ENCODE measurements at regions of chr15 and their contacts with region 1.

Region 1: GRCh38 chr15:94670438-94671034 is 439.2 kb downstream of the MCTP2 start:
- DNase-seq: peak in 1 of 2 experiments; percentile 34
- H3K4me3 ChIP-seq: no peak overlapping the region
- H3K4me3 Mint-ChIP-seq: no peak overlapping the region
- H3K27ac Mint-ChIP-seq: no peak overlapping the region
- H3K4me1 ChIP-seq: no peaks in the 10 kb centered on the region
- H3K4me1 Mint-ChIP-seq: no peaks in the 10 kb centered on the region
- H3K27me3 ChIP-seq: no peaks in the 10 kb centered on the region
- H3K27me3 Mint-ChIP-seq: peaks cover 12% of the 10 kb centered on the region
- CTCF ChIP-seq: peak; percentile 49 to 59

Region 2: GRCh38 chr15:94582369-94582768 is 88.2 kb before region 1 on chr15:
- CTCF ChIA-PET with region 1: no interaction called
- POLR2A ChIA-PET with region 1: no interaction called
- intact Hi-C with region 1: loop called (anchors 5 kb)
- DNase-seq: peak; percentile 38 to 41
- H3K4me3 ChIP-seq: no peak overlapping the region
- H3K4me3 Mint-ChIP-seq: no peak overlapping the region
- H3K27ac Mint-ChIP-seq: no peak overlapping the region
- H3K4me1 ChIP-seq: no peaks in the 10 kb centered on the region
- H3K4me1 Mint-ChIP-seq: no peaks in the 10 kb centered on the region
- H3K27me3 ChIP-seq: no peaks in the 10 kb centered on the region
- H3K27me3 Mint-ChIP-seq: peaks cover 16% of the 10 kb centered on the region
- CTCF ChIP-seq: peak; percentile 35 to 51

Region 3: DNA sequence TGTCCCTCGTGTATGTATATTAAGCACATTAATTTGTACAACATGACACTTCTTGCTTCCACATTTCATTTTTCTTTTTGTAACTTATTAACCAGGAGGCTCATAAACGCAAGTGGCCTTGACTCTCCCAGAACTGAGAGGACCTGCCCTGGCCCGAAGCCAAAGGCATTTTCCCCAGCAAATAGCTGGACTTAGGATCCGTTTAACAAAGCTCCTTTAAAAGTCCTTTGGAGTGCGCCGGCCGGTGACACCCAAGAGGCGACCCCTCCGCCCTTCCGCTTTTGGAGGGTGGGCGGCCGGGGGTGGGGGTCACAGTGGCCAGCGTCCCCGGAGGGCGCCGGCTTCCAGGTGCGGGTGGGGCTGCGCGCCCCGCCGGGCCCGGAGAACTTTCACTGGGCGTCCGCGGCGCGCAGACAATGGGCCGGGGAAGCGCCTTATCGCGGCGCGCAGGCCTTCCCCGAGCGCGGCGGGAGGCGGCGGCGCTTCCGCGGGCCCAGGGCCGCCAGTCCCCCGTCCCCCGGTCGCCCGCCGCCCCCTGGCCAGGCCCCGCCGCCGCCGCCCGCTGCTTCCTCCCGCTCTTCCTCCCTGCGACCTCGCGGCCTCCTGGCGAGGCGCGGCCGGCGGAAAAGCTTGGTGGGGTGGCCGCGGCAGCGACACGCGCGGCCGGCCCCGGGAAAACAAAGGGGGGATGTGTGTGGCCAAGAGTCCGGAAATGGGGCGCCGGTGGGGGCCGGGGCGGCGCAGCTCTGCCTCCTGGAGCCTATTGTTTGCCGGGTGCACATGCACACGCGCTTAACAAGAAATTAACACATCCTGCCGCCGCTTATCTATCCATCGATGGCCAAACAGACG is 174.2 kb after region 1 on chr15:
- CTCF ChIA-PET with region 1: no interaction called
- POLR2A ChIA-PET with region 1: no interaction called
- intact Hi-C with region 1: loop called (anchors 2 kb)
- DNase-seq: peak; percentile 78 to 84
- H3K4me3 ChIP-seq: peak overlapping the region; percentile 34
- H3K4me3 Mint-ChIP-seq: peak overlapping the region; percentile 76
- H3K27ac Mint-ChIP-seq: peak overlapping the region; percentile 84
- H3K4me1 ChIP-seq: peaks cover 10% of the 10 kb centered on the region; the same call in 1 of the 2 replicates
- H3K4me1 Mint-ChIP-seq: peaks cover 6% of the 10 kb centered on the region
- H3K27me3 ChIP-seq: no peaks in the 10 kb centered on the region
- H3K27me3 Mint-ChIP-seq: no peaks in the 10 kb centered on the region
- CTCF ChIP-seq: peak in 1 of 2 experiments; percentile 10

Region 4: DNA sequence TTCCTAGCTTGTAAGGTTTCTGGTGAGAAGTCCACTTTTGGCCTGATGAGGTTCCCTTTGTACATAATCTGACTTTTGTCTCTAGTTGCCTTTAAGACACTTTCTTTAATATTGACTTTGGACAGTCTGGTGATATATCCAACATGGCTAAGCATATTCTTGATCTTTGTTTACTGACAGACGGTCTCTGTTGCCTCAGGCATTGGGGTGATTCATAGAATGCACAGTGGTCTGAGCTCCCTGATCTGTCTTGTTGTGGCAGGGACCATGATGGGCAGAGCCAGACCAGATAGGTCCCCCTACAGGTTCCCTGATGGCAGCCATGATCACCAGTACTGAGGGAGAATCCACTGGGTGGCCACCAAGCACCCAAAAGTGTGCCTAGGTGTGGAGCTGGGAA is 239.0 kb after region 1 on chr15:
- CTCF ChIA-PET with region 1: no interaction called
- POLR2A ChIA-PET with region 1: no interaction called
- intact Hi-C with region 1: loop called (anchors 5 kb)
- DNase-seq: no peak
- H3K4me3 ChIP-seq: no peak overlapping the region
- H3K4me3 Mint-ChIP-seq: no peak overlapping the region
- H3K27ac Mint-ChIP-seq: no peak overlapping the region
- H3K4me1 ChIP-seq: peaks cover 3% of the 10 kb centered on the region; the same call in 1 of the 2 replicates
- H3K4me1 Mint-ChIP-seq: peaks cover 6% of the 10 kb centered on the region
- H3K27me3 ChIP-seq: no peaks in the 10 kb centered on the region
- H3K27me3 Mint-ChIP-seq: no peaks in the 10 kb centered on the region
- CTCF ChIP-seq: no peak

Region 5: GRCh38 chr15:95025924-95026728 is 355.6 kb after region 1 on chr15:
- CTCF ChIA-PET with region 1: no interaction called
- POLR2A ChIA-PET with region 1: no interaction called
- intact Hi-C with region 1: loop called (anchors 1 kb)
- DNase-seq: peak; percentile 42 to 48
- H3K4me3 ChIP-seq: no peak overlapping the region
- H3K4me3 Mint-ChIP-seq: no peak overlapping the region
- H3K27ac Mint-ChIP-seq: no peak overlapping the region
- H3K4me1 ChIP-seq: no peaks in the 10 kb centered on the region
- H3K4me1 Mint-ChIP-seq: no peaks in the 10 kb centered on the region
- H3K27me3 ChIP-seq: no peaks in the 10 kb centered on the region
- H3K27me3 Mint-ChIP-seq: peaks cover 5% of the 10 kb centered on the region
- CTCF ChIP-seq: peak in 1 of 2 experiments; percentile 47

Region 6: DNA sequence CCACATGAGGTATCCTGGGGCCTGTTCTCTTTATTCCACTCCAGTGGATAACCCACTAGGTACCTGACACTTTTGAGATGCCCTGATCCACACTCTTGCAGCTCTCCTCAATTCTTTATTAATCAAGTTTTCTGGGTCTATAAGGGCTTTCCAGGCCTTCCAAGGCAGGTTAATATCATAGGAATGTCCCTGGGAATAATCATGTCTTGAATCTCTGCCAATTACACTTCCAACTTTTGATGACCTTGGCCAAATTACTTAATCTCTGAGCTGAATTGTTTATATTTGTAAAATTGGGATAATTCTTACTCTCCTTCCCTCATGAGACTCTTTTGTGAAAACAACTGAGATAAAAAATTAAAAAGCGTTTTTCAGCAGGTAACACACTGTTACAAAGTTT is 442.5 kb after region 1 on chr15:
- CTCF ChIA-PET with region 1: no interaction called
- POLR2A ChIA-PET with region 1: no interaction called
- intact Hi-C with region 1: loop called (anchors 5 kb)
- DNase-seq: no peak
- H3K4me3 ChIP-seq: no peak overlapping the region
- H3K4me3 Mint-ChIP-seq: no peak overlapping the region
- H3K27ac Mint-ChIP-seq: no peak overlapping the region
- H3K4me1 ChIP-seq: no peaks in the 10 kb centered on the region
- H3K4me1 Mint-ChIP-seq: no peaks in the 10 kb centered on the region
- H3K27me3 ChIP-seq: no peaks in the 10 kb centered on the region
- H3K27me3 Mint-ChIP-seq: no peaks in the 10 kb centered on the region
- CTCF ChIP-seq: no peak

Region 7: DNA sequence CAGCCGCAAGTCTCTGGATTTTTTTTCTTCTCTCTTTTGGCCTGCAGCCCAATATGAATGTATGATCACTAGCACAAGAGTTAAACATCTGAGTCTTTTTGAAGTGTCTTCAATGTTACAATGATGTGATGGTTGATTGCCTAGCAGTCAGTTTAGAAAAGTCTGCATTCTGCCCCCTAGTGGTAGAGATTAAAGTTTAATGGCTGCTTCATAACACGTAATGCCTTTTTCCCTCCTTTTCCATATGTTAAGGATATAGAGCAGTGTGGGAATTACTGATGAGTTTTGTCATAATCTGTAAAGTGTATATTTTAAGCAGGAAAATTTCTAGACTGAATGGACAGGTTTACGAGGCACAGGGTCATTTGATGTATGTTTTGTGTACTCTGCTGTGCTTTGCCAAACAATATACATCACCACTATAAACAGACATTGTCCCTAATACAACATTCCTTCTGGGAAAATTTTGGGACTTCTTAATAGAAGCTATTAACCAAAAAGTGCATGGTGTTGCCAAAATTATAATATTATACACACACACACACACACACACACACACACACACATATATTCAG is 621.4 kb after region 1 on chr15:
- CTCF ChIA-PET with region 1: no interaction called
- POLR2A ChIA-PET with region 1: no interaction called
- intact Hi-C with region 1: loop called (anchors 1 kb)
- DNase-seq: peak in 1 of 2 experiments; percentile 32
- H3K4me3 ChIP-seq: no peak overlapping the region
- H3K4me3 Mint-ChIP-seq: no peak overlapping the region
- H3K27ac Mint-ChIP-seq: no peak overlapping the region
- H3K4me1 ChIP-seq: no peaks in the 10 kb centered on the region
- H3K4me1 Mint-ChIP-seq: no peaks in the 10 kb centered on the region
- H3K27me3 ChIP-seq: no peaks in the 10 kb centered on the region
- H3K27me3 Mint-ChIP-seq: peaks cover 6% of the 10 kb centered on the region
- CTCF ChIP-seq: peak; percentile 48

Measured in Caco-2 (cell line).